Activated CD4-positive, alpha-beta memory T cell treated with anti-CD3 and anti-CD28 coated beads for 36 hours (primary cell): ENCODE measurements at regions of chr3 and their contacts with region 1.

Region 1: GRCh38 chr3:59424268-59425010 is 374.6 kb upstream of the CFAP20DC start:
- DNase-seq: peak; percentile 28
- H3K4me3 Mint-ChIP-seq: no peak overlapping the region
- H3K27ac Mint-ChIP-seq: no peak overlapping the region
- H3K4me1 Mint-ChIP-seq: peaks cover 69% of the 10 kb centered on the region
- H3K27me3 Mint-ChIP-seq: peaks cover 14% of the 10 kb centered on the region

Region 2: DNA sequence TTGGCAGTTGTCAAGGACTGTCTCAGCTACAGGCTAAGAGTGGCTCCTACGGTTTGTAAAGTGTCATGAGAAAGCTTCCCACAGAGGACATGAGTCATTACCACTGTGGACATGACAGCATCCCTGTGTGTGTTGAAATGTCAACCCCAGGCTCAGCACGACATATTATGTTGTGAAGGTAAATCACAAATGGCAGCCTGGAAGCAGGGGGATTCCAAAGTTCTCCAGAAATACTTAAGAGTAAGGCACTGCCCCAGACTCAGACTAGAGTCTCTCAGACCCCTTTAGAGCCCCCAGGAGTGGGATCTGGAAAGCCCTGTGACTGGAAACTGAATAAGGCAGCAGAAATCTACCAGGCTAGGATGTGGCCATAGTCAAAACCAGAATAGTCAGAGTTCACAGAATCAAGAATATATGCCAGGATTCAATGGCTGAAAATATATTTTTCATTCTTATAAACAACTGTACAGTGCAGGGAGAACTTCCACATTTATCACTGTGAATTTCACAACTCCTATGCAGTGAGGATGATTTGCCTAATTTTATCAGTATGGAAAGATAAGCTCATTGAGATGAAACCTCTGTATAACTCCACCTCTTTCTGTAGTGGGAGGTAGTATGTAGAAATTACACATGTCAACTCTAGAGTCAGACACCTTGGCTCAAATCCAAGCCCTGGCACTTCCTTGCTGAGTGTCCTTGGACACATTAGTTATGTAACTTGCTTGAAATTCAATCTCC is 137.5 kb before region 1 on chr3:
- CTCF ChIA-PET with region 1: no interaction called
- POLR2A ChIA-PET with region 1: no interaction called
- intact Hi-C with region 1: loop called (anchors 2 kb)
- DNase-seq: peak; percentile 52
- H3K4me3 Mint-ChIP-seq: no peak overlapping the region
- H3K27ac Mint-ChIP-seq: peak overlapping the region; percentile 18
- H3K4me1 Mint-ChIP-seq: peaks cover 35% of the 10 kb centered on the region
- H3K27me3 Mint-ChIP-seq: no peaks in the 10 kb centered on the region

Region 3: GRCh38 chr3:59444294-59444671 is 19.8 kb after region 1 on chr3:
- CTCF ChIA-PET with region 1: interaction called, 6 read pairs
- POLR2A ChIA-PET with region 1: interaction called, 11 read pairs
- intact Hi-C with region 1: loop called (anchors 1 kb)
- DNase-seq: peak; percentile 48
- H3K4me3 Mint-ChIP-seq: peak overlapping the region; percentile 38
- H3K27ac Mint-ChIP-seq: peak overlapping the region; percentile 49
- H3K4me1 Mint-ChIP-seq: peaks cover 50% of the 10 kb centered on the region
- H3K27me3 Mint-ChIP-seq: peaks cover 1% of the 10 kb centered on the region

Region 4: GRCh38 chr3:59456852-59457485 is 32.5 kb after region 1 on chr3:
- CTCF ChIA-PET with region 1: interaction called, 10 read pairs
- POLR2A ChIA-PET with region 1: no interaction called
- intact Hi-C with region 1: loop called (anchors 1 kb)
- DNase-seq: peak; percentile 63
- H3K4me3 Mint-ChIP-seq: no peak overlapping the region
- H3K27ac Mint-ChIP-seq: peak overlapping the region; percentile 10
- H3K4me1 Mint-ChIP-seq: peaks cover 26% of the 10 kb centered on the region
- H3K27me3 Mint-ChIP-seq: no peaks in the 10 kb centered on the region

Region 5: GRCh38 chr3:59502806-59503205 is 78.4 kb after region 1 on chr3:
- CTCF ChIA-PET with region 1: no interaction called
- POLR2A ChIA-PET with region 1: no interaction called
- intact Hi-C with region 1: loop called (anchors 2 kb)
- DNase-seq: peak; percentile 58
- H3K4me3 Mint-ChIP-seq: no peak overlapping the region
- H3K27ac Mint-ChIP-seq: no peak overlapping the region
- H3K4me1 Mint-ChIP-seq: peaks cover 8% of the 10 kb centered on the region
- H3K27me3 Mint-ChIP-seq: no peaks in the 10 kb centered on the region

Region 6: GRCh38 chr3:59559721-59560435 is 135.4 kb after region 1 on chr3:
- CTCF ChIA-PET with region 1: interaction called, 4 read pairs
- POLR2A ChIA-PET with region 1: no interaction called
- intact Hi-C with region 1: loop called (anchors 1 kb)
- DNase-seq: peak; percentile 50
- H3K4me3 Mint-ChIP-seq: no peak overlapping the region
- H3K27ac Mint-ChIP-seq: peak overlapping the region; percentile 80
- H3K4me1 Mint-ChIP-seq: peaks cover 31% of the 10 kb centered on the region
- H3K27me3 Mint-ChIP-seq: peaks cover 5% of the 10 kb centered on the region